Activated B cell treated with CpG ODN at 0.5 μM for 24 hours (primary cell): ENCODE measurements at regions of chr7 and their contacts with region 1.

Region 1: GRCh38 chr7:106015381-106016218 is 52.5 kb downstream of the CDHR3 start:
- DNase-seq: no peak
- ATAC-seq: no peak
- H3K4me3 Mint-ChIP-seq: no peak overlapping the region
- H3K27ac Mint-ChIP-seq: no peak overlapping the region
- H3K4me1 Mint-ChIP-seq: peaks cover 19% of the 10 kb centered on the region
- H3K27me3 Mint-ChIP-seq: peaks cover 4% of the 10 kb centered on the region
- CTCF ChIP-seq: no peak

Region 2: GRCh38 chr7:106031300-106032035 is 15.9 kb after region 1 on chr7:
- CTCF ChIA-PET with region 1: interaction called, 11 read pairs
- POLR2A ChIA-PET with region 1: no interaction called
- intact Hi-C with region 1: loop called (anchors 2 kb)
- DNase-seq: no peak
- ATAC-seq: no peak
- H3K4me3 Mint-ChIP-seq: no peak overlapping the region
- H3K27ac Mint-ChIP-seq: no peak overlapping the region
- H3K4me1 Mint-ChIP-seq: peaks cover 30% of the 10 kb centered on the region
- H3K27me3 Mint-ChIP-seq: no peaks in the 10 kb centered on the region
- CTCF ChIP-seq: no peak

Region 3: GRCh38 chr7:106056513-106057203 is 41.1 kb after region 1 on chr7:
- CTCF ChIA-PET with region 1: no interaction called
- POLR2A ChIA-PET with region 1: no interaction called
- intact Hi-C with region 1: no loop called
- DNase-seq: peak; percentile 55
- ATAC-seq: peak; percentile 53
- H3K4me3 Mint-ChIP-seq: peak overlapping the region; percentile 71
- H3K27ac Mint-ChIP-seq: peak overlapping the region; percentile 99
- H3K4me1 Mint-ChIP-seq: peaks cover 65% of the 10 kb centered on the region
- H3K27me3 Mint-ChIP-seq: no peaks in the 10 kb centered on the region
- CTCF ChIP-seq: peak; percentile 65